BJ (cell line): ENCODE measurements at regions of chr7 and their contacts with region 1.

Region 1: DNA sequence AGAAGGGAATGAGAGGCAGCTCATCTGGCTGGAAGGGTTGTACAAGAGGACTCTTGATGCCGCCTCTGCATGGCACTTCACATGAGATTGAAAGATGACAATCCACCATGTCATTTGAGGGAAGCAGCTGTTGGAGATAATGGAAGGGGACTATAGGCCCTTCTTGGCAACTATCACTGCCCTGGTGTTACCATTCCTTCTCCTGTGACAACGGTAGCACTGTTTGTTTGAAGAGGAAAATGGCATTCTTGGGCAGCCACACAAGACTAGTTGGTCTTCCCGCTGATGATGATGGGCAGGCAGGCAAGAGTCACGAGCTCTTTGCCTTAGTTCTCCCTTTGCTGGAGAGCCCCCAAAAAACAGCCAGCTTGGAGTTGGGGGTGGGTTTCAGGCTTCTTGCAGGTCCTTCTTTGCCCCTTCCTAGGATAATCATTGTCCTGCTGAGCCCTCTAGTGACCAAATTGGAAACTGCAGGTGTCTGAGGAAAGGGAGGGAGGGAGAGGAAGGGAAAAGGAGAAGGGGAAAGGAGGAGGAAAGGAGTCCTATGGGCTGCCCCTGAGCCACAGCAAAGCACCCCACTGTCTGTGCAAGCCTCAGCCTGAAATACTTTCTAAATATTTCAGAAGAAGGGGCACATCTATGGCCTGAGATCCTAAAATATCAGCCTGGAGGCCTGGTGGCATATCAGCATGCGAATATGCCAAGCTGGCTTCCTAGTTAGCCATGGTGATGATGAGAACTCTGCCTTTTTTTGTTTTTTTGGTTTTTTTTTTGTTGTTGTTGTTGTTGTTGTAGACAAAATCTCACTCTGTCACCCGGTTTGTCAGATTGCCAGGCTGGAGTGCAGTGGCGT is 165.6 kb upstream of the KMT2E start:
- DNase-seq: no peak
- H3K4me3 ChIP-seq: no peak overlapping the region
- H3K27me3 ChIP-seq: no peaks in the 10 kb centered on the region; the same call in none of the 2 replicates
- CTCF ChIP-seq: peak; percentile 84

Region 2: GRCh38 chr7:104231054-104232046 is 617.0 kb before region 1 on chr7:
- CTCF ChIA-PET with region 1: interaction called, 29 read pairs
- POLR2A ChIA-PET with region 1: no interaction called
- DNase-seq: no peak
- H3K4me3 ChIP-seq: no peak overlapping the region
- H3K27me3 ChIP-seq: peaks cover 2% of the 10 kb centered on the region
- CTCF ChIP-seq: peak; percentile 92

Region 3: GRCh38 chr7:104643587-104644217 is 204.7 kb before region 1 on chr7:
- CTCF ChIA-PET with region 1: interaction called, 18 read pairs
- POLR2A ChIA-PET with region 1: no interaction called
- DNase-seq: no peak
- H3K4me3 ChIP-seq: no peak overlapping the region
- H3K27me3 ChIP-seq: no peaks in the 10 kb centered on the region
- CTCF ChIP-seq: peak; percentile 53

Region 4: GRCh38 chr7:104825099-104825498 is 23.3 kb before region 1 on chr7:
- CTCF ChIA-PET with region 1: interaction called, 22 read pairs
- POLR2A ChIA-PET with region 1: no interaction called
- DNase-seq: no peak
- H3K4me3 ChIP-seq: no peak overlapping the region
- H3K27me3 ChIP-seq: no peaks in the 10 kb centered on the region
- CTCF ChIP-seq: no peak

Region 5: DNA sequence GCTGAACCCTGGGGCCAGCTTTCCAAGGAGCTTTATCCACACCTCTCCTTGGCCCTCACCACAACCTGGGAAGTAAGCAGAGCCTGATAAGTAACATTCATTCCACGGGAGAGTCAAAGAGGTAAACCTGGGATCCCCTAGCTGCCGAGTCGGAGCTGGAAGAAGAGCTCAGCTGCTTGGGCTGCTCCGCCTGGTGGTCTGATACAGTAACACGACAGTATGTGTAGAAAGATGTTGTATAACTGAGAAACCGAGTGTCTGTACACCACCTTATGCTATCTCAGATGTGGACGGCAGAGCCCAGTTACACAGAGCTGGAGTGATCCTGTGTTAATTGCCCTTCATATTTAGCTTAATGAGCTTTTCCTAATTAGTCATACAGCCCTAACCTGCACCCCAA is 14.4 kb after region 1 on chr7:
- CTCF ChIA-PET with region 1: interaction called, 18 read pairs
- POLR2A ChIA-PET with region 1: no interaction called
- DNase-seq: no peak
- H3K4me3 ChIP-seq: no peak overlapping the region
- H3K27me3 ChIP-seq: peaks cover 9% of the 10 kb centered on the region
- CTCF ChIP-seq: peak; percentile 41

Region 6: DNA sequence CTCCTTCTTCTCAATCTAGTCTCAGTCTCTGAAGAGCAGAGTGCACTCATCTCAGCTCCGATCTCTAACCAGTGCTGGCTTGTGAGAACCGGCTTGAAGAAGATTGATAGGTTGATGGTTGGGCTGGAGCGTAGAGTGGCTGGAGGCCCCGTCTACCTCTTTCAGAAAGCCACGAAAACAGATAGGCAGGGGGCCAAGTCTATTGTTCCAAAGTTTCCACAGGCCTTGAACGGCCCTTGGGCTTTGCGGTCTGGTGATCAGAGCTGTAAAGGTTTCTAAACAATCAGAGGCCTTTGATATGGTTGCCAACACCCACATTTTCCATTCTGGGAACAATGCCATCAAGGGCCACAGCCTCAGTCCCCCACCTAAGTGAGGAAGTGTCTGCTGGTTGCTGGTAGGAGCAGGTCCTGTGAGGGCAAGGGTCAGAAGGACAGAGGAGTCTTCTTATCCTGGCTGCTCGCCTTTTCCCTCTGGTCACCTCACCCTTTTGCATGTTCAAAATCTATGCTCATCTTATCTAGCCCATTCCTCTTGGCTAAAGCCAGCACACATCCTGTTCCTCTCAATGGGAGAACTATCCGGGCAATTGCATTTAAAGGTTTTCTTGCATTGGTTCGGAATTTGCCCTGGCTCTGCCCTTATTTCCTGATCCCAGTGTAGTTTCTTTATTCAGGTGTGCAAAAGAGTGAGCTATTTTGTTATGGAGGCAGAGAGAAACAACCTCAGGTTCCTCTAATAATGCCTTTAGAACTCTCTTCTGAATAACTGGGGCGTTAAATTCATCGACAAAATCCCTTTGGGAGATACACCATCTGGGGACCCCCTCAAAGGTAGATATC is 95.4 kb after region 1 on chr7:
- CTCF ChIA-PET with region 1: no interaction called
- POLR2A ChIA-PET with region 1: no interaction called
- DNase-seq: no peak
- H3K4me3 ChIP-seq: no peak overlapping the region
- H3K27me3 ChIP-seq: no peaks in the 10 kb centered on the region
- CTCF ChIP-seq: no peak

Region 7: DNA sequence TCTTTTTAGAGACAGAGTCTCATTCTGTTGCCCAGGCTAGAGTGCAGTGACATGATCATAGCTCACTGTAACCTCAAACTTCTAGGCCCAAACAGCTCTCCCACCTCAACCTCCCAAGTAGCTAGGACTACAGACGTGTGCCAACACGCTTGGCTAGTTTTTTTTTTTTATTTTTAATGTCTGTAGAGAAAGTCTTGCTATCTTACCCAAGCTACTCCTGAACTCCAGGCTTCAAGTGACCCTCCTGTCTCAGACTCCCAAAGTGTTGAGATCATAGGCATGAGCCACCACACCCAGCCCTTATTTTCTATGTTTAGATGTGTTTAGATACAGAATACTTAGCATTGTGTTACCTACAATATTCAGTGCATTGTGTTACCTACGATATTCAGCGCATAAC is 212.1 kb after region 1 on chr7:
- CTCF ChIA-PET with region 1: no interaction called
- POLR2A ChIA-PET with region 1: no interaction called
- DNase-seq: no peak
- H3K4me3 ChIP-seq: no peak overlapping the region
- H3K27me3 ChIP-seq: no peaks in the 10 kb centered on the region
- CTCF ChIP-seq: no peak